BJ (cell line): ENCODE measurements at regions of chr18 and their contacts with region 1.

Region 1: DNA sequence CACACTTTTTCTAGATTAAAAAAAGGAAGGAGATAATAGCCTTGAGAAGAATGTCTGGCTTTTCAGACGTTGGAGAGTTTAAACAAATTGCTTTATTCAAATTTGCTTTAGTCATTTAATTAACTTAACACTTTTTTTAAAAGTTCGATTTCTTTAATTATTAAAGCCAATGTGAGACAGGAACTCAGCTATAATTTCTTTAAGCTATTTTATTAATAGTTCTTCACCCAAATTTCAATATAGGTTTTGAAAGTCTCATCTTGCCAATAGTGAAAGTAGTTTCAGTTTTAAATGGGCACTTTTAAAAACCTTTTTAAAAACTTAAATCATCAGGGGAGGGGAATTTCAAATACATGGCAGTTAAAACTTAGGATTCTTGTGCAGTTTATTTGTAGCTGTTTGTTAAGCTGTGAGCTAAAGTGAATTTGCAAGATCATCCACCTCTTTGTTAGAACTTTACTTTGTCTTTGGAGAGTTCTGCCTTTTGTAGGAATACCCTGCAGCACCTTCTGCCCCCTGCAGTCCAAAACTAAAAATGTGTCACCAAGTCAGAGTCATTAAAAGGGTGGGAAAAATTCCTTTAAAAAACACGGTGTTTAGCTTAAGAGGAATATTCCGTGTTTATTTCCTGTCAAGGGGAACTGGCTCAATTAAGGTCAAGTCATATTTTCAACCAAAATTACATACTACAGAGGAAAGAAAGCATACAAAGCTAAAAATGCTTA is 4.6 kb downstream of the TGIF1 start:
- DNase-seq: no peak
- H3K4me3 ChIP-seq: peak overlapping the region; percentile 26
- H3K27me3 ChIP-seq: no peaks in the 10 kb centered on the region
- CTCF ChIP-seq: peak; percentile 70

Region 2: DNA sequence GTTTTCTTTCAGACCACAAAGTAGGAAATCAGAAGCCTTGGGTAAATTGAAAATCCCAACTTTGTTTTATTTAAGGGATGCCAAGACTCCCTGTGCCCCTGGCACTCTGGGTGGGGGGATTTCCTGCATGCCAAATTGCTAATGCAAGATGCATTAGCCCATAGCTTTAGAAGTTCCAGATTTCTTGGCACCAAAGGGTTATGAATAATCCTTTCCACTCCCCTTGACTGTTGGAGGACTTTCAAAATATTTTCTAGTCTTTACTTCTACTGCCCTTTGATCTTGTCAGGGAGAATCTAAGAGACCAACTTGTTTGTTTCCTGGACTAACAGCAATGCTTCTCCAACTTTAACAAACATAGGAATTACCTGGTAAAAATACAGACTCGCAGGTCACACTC is 86.3 kb before region 1 on chr18:
- CTCF ChIA-PET with region 1: no interaction called
- POLR2A ChIA-PET with region 1: interaction called, 10 read pairs
- DNase-seq: peak; percentile 69
- H3K4me3 ChIP-seq: no peak overlapping the region
- H3K27me3 ChIP-seq: no peaks in the 10 kb centered on the region
- CTCF ChIP-seq: no peak